SK-N-SH (cell line): ENCODE measurements at regions of chr20 and their contacts with region 1.

Region 1: GRCh38 chr20:20824924-20825584 is 112.6 kb upstream of the RALGAPA2 start:
- DNase-seq: peak; percentile 56
- H3K4me3 ChIP-seq: peak overlapping the region in 1 of 2 experiments; percentile 46; a peak in 1 of 4 replicates
- H3K27ac ChIP-seq: no peak overlapping the region
- H3K4me1 ChIP-seq: no peaks in the 10 kb centered on the region
- H3K27me3 ChIP-seq: peaks cover 40% of the 10 kb centered on the region
- CTCF ChIP-seq: peak; percentile 75
- EP300 ChIP-seq: no peak
- RAD21 ChIP-seq: peak; percentile 68

Region 2: DNA sequence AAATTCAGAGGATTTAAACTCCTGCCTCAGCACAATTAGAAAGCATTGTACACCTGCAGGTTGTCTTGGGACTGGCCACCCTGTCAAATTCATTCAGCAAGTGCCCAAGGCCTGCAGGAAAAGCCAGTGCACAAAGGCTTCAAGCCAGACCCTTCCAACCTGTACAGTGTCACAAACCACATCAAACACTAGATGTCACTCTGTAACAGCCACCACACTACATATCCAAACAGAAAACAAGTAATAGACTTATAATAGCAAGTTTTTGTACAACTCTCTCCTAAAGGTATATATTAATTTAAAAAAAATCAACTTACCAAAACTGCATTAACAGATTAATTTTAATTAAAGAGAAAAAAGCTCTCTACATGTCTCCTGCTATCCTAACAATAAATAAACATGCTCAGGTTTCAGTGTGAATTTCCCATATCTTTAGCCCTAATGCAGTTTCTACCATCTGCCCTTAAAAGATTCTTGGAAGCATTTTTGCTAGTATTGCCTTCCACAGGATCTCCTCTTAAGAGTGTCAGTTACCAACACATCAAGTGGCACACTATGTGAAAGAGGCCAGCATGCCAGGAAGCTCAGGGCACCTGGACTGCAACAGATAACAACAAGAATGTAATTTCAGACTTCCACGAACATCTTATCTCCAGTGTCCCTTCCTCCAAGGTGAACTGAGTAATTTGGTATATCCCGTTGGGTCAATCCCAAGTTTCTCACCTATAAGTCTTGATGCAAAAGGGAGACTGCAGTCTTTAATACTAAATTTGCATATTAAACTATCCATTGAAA is 160.1 kb before region 1 on chr20:
- CTCF ChIA-PET with region 1: interaction called, 85 read pairs
- POLR2A ChIA-PET with region 1: no interaction called
- DNase-seq: peak; percentile 33
- H3K4me3 ChIP-seq: no peak overlapping the region
- H3K27ac ChIP-seq: no peak overlapping the region
- H3K4me1 ChIP-seq: no peaks in the 10 kb centered on the region; a peak in 2 of 4 replicates
- H3K27me3 ChIP-seq: no peaks in the 10 kb centered on the region
- CTCF ChIP-seq: peak; percentile 58
- EP300 ChIP-seq: no peak
- RAD21 ChIP-seq: peak; percentile 84

Region 3: GRCh38 chr20:20799716-20800312 is 25.2 kb before region 1 on chr20:
- CTCF ChIA-PET with region 1: interaction called, 11 read pairs
- POLR2A ChIA-PET with region 1: no interaction called
- DNase-seq: no peak
- H3K4me3 ChIP-seq: no peak overlapping the region
- H3K27ac ChIP-seq: no peak overlapping the region
- H3K4me1 ChIP-seq: no peaks in the 10 kb centered on the region
- H3K27me3 ChIP-seq: peaks cover 27% of the 10 kb centered on the region; the same call in 1 of the 2 replicates
- CTCF ChIP-seq: no peak
- EP300 ChIP-seq: no peak
- RAD21 ChIP-seq: no peak

Region 4: GRCh38 chr20:20814685-20815084 is 10.4 kb before region 1 on chr20:
- CTCF ChIA-PET with region 1: interaction called, 23 read pairs
- POLR2A ChIA-PET with region 1: no interaction called
- DNase-seq: no peak
- H3K4me3 ChIP-seq: no peak overlapping the region
- H3K27ac ChIP-seq: no peak overlapping the region
- H3K4me1 ChIP-seq: no peaks in the 10 kb centered on the region; a peak in 1 of 4 replicates
- H3K27me3 ChIP-seq: no peaks in the 10 kb centered on the region; the same call in 1 of the 2 replicates
- CTCF ChIP-seq: no peak
- EP300 ChIP-seq: no peak
- RAD21 ChIP-seq: no peak